MCF 10A (cell line): ENCODE measurements at regions of chrX and their contacts with region 1.

Region 1: DNA sequence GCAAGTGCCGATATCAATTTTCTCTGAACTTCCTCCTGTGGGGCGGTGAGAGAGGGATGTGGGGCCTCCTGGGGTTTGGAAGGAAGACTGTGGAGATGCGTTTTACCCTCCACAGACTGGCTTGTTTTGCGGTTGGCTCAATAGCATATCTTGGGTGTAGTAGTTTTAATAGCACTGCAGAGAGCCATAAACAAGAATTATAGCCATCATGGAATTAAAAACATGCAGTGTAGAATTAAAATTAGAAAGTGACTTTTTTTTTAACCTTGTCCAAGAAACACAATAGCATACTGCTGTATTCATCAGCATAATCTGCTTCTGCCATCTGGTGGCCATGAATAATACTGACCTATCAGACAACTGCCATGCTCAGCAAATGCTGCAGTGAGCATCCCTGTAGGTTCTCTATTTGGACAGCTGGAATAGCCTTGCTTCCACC is 47.3 kb upstream of the SCML1 start:
- DNase-seq: peak; percentile 73
- H3K4me3 Mint-ChIP-seq: no peak overlapping the region
- H3K27ac Mint-ChIP-seq: no peak overlapping the region
- H3K4me1 Mint-ChIP-seq: no peaks in the 10 kb centered on the region
- H3K27me3 Mint-ChIP-seq: peaks cover 36% of the 10 kb centered on the region
- CTCF ChIP-seq: peak; percentile 64

Region 2: DNA sequence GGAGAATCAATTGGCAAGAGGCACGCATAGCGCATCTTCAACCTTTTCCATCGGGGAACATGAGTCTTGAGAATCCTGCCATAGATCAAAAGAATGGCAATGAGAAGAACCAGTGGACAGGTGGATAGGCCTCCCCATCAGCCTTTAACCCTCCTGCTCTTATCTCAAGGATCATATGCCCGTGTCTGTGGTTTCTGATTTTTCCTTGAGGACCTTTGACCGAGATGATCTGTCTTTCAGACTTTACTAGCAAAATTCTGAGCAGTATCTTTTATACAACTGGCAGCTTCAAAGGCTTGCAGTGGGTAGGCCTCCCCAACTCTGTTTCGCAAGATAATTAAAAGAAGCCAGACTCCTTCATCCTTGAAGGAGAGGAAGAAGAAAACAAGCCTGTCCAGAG is 569.2 kb before region 1 on chrX:
- CTCF ChIA-PET with region 1: interaction called, 24 read pairs
- POLR2A ChIA-PET with region 1: no interaction called
- intact Hi-C with region 1: loop called (anchors 1 kb)
- DNase-seq: no peak
- H3K4me3 Mint-ChIP-seq: no peak overlapping the region
- H3K27ac Mint-ChIP-seq: no peak overlapping the region
- H3K4me1 Mint-ChIP-seq: no peaks in the 10 kb centered on the region
- H3K27me3 Mint-ChIP-seq: no peaks in the 10 kb centered on the region
- CTCF ChIP-seq: no peak

Region 3: DNA sequence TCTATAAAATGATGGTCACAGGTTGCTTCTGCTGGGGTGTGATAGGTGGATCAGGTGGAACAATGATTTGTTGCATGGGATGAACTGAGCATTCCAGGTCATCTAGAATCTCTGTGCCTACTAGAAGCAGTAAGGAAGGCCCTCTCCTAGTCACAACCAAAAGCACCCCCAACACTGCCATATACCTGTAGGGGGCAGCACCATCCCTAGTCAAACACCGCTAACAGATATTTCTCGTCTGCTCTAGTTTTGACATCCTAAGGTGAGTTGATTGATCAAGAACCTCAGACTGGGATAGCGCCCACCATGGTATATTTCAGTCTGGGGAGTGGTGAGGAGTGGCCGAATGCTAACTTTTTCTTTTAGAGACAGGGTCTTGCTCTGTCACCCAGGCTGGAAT is 154.8 kb before region 1 on chrX:
- CTCF ChIA-PET with region 1: no interaction called
- POLR2A ChIA-PET with region 1: no interaction called
- intact Hi-C with region 1: loop called (anchors 1 kb)
- DNase-seq: peak; percentile 78
- H3K4me3 Mint-ChIP-seq: no peak overlapping the region
- H3K27ac Mint-ChIP-seq: no peak overlapping the region
- H3K4me1 Mint-ChIP-seq: no peaks in the 10 kb centered on the region
- H3K27me3 Mint-ChIP-seq: peaks cover 73% of the 10 kb centered on the region
- CTCF ChIP-seq: peak; percentile 42